ENCODE measurements at regions of chr2 and their contacts with region 1.

Region 1: DNA sequence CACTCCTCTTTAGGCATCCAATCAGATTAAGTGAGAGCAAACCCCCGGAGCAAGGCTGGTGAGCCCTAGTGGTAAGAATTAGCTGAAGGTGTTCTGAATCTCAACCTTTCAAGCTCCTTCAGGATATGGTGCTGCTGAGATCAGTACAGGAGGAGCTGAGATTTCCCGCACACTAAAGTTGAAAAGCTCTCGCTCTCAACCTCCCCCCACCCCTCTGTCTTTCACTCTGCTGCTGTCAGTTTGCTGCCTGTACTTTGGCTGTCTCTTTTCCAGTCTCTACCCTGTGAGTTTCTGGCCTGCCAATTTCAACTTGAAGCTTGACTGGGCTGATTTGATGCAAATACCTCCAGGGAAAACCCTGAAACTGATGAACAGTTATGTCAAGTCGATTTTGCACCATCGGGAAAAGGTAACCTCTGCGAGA is 15.7 kb downstream of the ZEB2 start:
- DNase-seq: no peak
- H3K4me3 ChIP-seq: no peak overlapping the region
- H3K27ac ChIP-seq: no peak overlapping the region
- H3K4me1 ChIP-seq: no peaks in the 10 kb centered on the region
- H3K27me3 ChIP-seq: no peaks in the 10 kb centered on the region
- CTCF ChIP-seq: peak in 1 of 2 donors; percentile 6

Region 2: DNA sequence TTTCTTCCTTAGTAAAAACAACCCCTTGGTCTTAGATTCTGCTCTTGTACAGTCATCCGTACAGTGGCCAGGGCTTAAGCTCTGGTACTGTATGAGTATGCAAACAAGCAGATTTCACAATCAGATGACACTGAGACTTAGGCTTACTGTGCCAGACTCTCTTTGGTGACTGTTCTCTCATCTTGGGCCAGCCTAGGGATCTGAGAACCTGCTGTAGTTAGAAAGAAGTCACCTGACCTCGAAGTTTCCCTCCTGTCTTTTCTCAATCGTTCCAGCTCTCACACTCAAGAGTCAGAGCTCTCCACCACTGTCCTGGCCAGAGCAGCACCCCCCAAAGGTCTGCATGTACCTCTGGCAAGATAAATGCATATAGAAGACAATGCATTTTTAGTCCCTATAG is 47.5 kb before region 1 on chr2:
- CTCF ChIA-PET with region 1: no interaction called
- dilution Hi-C with region 1: loop called (anchors 5 kb)
- in situ Hi-C with region 1: no loop called
- intact Hi-C with region 1: no loop called
- DNase-seq: peak; percentile 46
- H3K4me3 ChIP-seq: no peak overlapping the region
- H3K27ac ChIP-seq: no peak overlapping the region
- H3K4me1 ChIP-seq: no peaks in the 10 kb centered on the region
- H3K27me3 ChIP-seq: peaks cover 2% of the 10 kb centered on the region
- CTCF ChIP-seq: no peak